Activated T-helper 1 cell treated with anti-CD3 and anti-CD28 coated beads, Interleukin-12 subunit alpha, Interleukin-12 subunit beta, Interleukin-2, Interleukin-4 antibody, amounts not matched to agents 30 ng/mL and 10 ng/mL and 1 ng/mL, durations not matched to agents 14 hours and 24 hours and 36 hours (primary cell): ENCODE measurements at regions of chr1 and their contacts with region 1.

Region 1: DNA sequence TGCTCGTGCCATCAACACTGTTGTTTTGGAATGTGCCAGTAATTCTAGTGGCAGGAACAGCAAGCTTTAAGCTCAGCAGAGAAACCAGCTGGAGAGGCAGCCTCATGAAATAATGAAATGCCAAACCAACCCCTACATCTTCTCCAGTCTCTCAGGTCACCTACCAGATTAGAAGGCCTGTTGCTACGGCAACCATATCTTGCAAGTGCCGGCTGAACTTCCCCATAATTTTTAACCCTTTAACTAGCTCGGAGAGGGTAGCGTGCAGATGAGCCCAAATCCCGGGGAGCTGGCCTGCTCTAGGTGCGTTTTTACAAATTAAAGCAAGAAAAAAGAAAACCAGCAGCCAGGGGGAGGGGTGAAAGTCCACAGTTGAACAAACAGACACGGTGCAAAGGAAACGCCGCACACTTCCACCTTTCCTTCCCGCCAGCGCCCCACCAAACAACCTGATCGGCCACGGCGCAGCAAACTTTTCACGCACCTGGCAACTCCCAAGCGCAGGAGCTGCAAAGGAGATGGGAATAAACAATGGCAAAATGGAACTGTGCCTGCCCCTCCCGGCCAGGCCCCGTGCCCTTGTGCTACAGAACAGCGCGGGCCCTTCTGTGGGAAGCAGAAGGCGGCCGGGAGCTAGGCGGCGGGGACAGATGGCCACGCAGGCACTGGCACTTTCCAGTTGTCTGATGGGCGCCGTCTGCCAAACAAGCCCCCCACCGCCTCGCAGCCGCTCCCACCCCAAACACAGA is 50.1 kb downstream of the SSBP3 start:
- DNase-seq: no peak
- H3K4me3 Mint-ChIP-seq: peak overlapping the region; percentile 87
- H3K27ac Mint-ChIP-seq: peak overlapping the region; percentile 94
- H3K4me1 Mint-ChIP-seq: peaks cover 91% of the 10 kb centered on the region
- H3K27me3 Mint-ChIP-seq: no peaks in the 10 kb centered on the region

Region 2: DNA sequence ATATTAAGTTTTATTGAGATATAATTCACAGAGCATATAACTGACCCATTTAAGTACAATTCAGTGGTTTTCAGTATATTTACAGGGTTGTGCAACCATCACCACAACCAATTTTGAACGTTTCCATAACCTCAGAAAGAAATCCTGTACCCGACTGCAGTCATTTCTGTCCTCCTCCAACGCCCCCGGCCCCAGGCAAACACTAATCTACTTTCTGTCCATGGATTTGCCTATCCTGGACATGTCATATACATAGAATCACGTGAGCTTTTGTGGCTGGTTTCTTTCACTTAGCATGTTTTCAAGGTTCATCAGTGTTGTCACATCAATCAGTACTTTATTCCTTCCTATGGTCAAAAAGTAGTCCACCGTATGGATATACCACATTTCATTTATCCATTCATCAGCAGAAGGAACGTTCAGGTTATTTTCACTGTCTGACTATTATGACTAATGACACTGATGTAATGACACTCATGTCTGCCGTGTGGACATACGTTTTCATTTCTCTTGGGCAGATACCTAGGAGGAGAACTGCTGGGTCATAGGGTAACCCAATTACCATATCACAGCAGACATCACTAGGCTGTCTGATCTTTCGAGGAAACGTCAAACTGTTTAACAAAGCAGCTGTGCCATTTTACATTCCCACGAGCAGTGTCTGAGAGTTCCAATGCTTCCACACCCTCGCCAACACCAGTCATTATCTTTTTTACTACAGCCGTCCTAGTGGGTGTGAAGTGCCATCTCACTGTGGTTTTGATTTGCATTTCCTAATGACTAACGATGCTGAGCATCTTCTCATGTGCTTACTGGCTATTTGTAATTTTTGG is 125.4 kb before region 1 on chr1:
- intact Hi-C with region 1: loop called (anchors 2 kb)
- DNase-seq: no peak
- H3K4me3 Mint-ChIP-seq: no peak overlapping the region
- H3K27ac Mint-ChIP-seq: peak overlapping the region; percentile 86
- H3K4me1 Mint-ChIP-seq: peaks cover 27% of the 10 kb centered on the region
- H3K27me3 Mint-ChIP-seq: no peaks in the 10 kb centered on the region

Region 3: DNA sequence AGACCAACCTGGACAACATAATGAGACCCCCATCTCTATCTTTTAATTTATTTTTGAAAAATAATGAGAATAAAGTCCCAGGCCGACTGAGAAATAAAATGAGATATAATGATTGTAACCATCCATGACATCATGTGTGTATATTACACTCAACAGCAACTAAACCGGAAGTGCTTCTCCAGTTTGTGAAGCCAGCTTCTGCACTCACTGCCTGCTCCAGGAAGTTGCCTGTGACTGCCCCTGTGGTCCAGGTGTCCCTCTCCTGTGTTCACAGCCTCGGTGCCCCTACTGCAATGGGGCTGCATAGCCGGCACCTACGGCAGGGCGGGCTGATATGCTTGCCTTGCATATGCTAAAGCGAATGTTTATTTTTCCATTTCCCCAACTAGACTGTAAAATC is 18.2 kb before region 1 on chr1:
- intact Hi-C with region 1: no loop called
- DNase-seq: no peak
- H3K4me3 Mint-ChIP-seq: no peak overlapping the region
- H3K27ac Mint-ChIP-seq: peak overlapping the region; percentile 52
- H3K4me1 Mint-ChIP-seq: peaks cover 8% of the 10 kb centered on the region
- H3K27me3 Mint-ChIP-seq: no peaks in the 10 kb centered on the region

Region 4: DNA sequence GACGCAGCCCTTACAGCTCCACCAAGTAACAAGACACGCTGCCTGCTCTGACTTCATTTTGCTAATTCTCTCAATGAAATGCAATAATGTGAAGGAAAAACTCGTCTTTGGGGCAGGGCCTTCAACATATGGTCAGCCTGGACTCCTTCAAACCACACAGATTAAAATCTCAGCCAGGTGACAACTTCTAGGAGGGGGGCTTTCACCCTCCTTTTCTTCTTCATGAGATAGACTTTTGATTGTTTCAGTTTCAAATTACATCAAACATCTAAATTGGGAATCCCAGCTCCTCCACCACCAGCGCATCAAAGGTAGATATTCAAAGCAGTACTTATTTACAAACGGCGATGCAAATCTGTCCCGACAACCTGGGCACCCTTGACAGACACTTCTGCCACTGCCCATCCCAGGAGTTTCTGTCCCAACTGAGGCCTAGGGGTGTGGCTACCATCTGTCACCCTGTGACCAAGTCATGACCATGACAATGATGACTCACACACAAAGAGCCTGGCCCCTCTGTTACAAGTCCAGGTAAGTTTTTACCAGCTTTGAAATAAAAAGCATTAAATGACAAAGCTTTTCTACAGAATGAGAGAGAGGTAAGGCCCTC is 20.4 kb after region 1 on chr1:
- intact Hi-C with region 1: loop called (anchors 1 kb)
- DNase-seq: peak; percentile 7
- H3K4me3 Mint-ChIP-seq: no peak overlapping the region
- H3K27ac Mint-ChIP-seq: peak overlapping the region; percentile 67
- H3K4me1 Mint-ChIP-seq: peaks cover 77% of the 10 kb centered on the region
- H3K27me3 Mint-ChIP-seq: no peaks in the 10 kb centered on the region

Region 5: GRCh38 chr1:55352080-55352810 is 996.1 kb after region 1 on chr1:
- intact Hi-C with region 1: no loop called
- DNase-seq: no peak
- H3K4me3 Mint-ChIP-seq: no peak overlapping the region
- H3K27ac Mint-ChIP-seq: no peak overlapping the region
- H3K4me1 Mint-ChIP-seq: no peaks in the 10 kb centered on the region
- H3K27me3 Mint-ChIP-seq: peaks cover 8% of the 10 kb centered on the region